Activated T-helper 2 cell treated with anti-CD3 and anti-CD28 coated beads, Interferon-gamma antibody, Interleukin-2, Interleukin-4, amounts not matched to agents 10 μg/mL and 5 μg/mL and 100 μg/mL, durations not matched to agents 14 hours and 24 hours and 36 hours (primary cell): ENCODE measurements at regions of chr9 and their contacts with region 1.

Region 1: DNA sequence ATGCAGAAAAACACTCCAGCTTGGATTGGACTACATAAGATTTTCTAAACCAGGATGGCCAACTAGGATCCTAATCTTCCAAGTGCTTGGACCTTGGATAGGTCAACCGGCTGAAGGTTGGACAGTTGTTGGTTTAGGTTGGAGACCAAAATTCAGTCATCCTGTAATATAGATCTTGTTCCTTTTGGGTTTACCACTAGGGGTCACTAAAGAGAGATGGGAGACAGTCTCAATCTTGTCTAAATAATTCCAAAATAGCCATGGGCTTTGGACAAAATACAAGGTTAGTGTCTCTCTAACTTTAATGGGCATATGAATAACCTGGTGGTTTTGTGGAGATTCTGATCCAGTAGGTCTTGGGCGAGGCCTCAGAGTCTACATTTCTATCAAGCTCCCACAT is 148.7 kb upstream of the ERCC6L2 start:
- DNase-seq: no peak
- H3K4me3 Mint-ChIP-seq: no peak overlapping the region
- H3K27ac Mint-ChIP-seq: no peak overlapping the region
- H3K4me1 Mint-ChIP-seq: peaks cover 41% of the 10 kb centered on the region
- H3K27me3 Mint-ChIP-seq: peaks cover 10% of the 10 kb centered on the region

Region 2: GRCh38 chr9:95171001-95171400 is 555.8 kb before region 1 on chr9:
- intact Hi-C with region 1: loop called (anchors 10 kb)
- DNase-seq: no peak
- H3K4me3 Mint-ChIP-seq: peak overlapping the region; percentile 48
- H3K27ac Mint-ChIP-seq: peak overlapping the region; percentile 63
- H3K4me1 Mint-ChIP-seq: peaks cover 36% of the 10 kb centered on the region
- H3K27me3 Mint-ChIP-seq: no peaks in the 10 kb centered on the region

Region 3: GRCh38 chr9:95462249-95463147 is 264.3 kb before region 1 on chr9:
- intact Hi-C with region 1: loop called (anchors 10 kb)
- DNase-seq: peak; percentile 81
- H3K4me3 Mint-ChIP-seq: peak overlapping the region; percentile 71
- H3K27ac Mint-ChIP-seq: peak overlapping the region; percentile 21
- H3K4me1 Mint-ChIP-seq: peaks cover 29% of the 10 kb centered on the region
- H3K27me3 Mint-ChIP-seq: peaks cover 43% of the 10 kb centered on the region

Region 4: GRCh38 chr9:95715868-95716435 is 10.8 kb before region 1 on chr9:
- intact Hi-C with region 1: no loop called
- DNase-seq: no peak
- H3K4me3 Mint-ChIP-seq: no peak overlapping the region
- H3K27ac Mint-ChIP-seq: no peak overlapping the region
- H3K4me1 Mint-ChIP-seq: no peaks in the 10 kb centered on the region
- H3K27me3 Mint-ChIP-seq: peaks cover 11% of the 10 kb centered on the region

Region 5: DNA sequence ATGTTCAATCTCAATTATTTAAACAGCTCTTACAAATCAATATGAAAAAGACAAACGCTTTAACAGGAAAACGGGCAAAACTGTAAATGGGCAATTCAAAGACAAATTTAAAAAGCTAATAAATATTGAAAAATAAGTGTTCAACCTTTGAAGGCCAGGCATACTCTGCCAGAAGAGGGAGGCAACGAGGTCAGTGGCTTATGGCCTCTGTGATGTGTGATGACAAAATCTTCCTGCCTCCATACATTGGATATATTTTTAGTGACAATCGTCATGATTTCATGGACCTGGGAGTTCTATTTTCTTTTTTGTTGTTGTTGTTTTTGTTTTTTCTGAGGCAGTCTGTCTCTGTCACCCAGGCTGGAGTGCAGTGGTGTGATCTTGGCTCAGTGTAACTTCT is 17.6 kb after region 1 on chr9:
- intact Hi-C with region 1: no loop called
- DNase-seq: no peak
- H3K4me3 Mint-ChIP-seq: no peak overlapping the region
- H3K27ac Mint-ChIP-seq: no peak overlapping the region
- H3K4me1 Mint-ChIP-seq: peaks cover 3% of the 10 kb centered on the region
- H3K27me3 Mint-ChIP-seq: peaks cover 41% of the 10 kb centered on the region

Region 6: DNA sequence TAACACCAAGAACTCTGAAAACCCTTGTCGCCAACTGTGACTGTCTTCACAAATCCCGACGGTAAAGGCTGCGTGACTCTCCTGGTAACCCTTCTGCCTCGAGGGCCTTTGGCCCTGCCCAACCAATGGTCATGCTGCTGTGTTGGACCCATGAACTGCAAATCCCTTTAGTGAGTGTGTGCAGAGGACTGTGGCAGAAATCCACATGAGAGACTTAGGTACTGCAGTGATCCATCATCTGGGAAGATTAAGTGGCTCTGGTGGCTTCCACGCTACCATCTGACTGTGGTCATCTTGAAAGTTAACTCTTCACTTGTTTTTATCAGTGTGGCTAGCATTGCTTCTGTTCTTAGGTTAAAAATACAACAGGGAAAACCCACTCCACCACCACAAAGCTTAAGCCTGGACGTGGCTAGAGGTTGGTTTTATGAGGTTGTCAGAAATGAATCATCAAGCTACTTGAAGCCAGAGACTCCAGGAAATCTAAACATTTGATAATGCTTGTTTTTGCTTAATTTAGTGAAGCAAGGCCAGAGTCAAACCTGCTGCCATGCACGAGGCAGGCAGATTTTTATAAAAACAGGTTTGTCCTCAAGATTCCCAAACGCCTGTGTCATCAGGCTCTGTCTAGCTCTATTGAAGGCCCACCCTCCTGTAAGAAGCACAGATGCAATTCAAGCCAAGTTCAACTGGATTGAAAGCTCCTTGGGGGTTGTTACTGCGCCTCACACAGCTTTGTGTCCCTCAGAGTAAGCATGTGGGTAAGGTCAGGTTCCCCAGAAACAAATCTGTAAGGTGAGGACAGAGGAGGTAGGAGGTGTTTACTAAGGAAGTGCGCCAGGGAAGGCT is 96.1 kb after region 1 on chr9:
- intact Hi-C with region 1: loop called (anchors 1 kb)
- DNase-seq: peak; percentile 40
- H3K4me3 Mint-ChIP-seq: no peak overlapping the region
- H3K27ac Mint-ChIP-seq: peak overlapping the region; percentile 18
- H3K4me1 Mint-ChIP-seq: peaks cover 40% of the 10 kb centered on the region
- H3K27me3 Mint-ChIP-seq: peaks cover 39% of the 10 kb centered on the region

Region 7: GRCh38 chr9:96009690-96010472 is 283.1 kb after region 1 on chr9:
- intact Hi-C with region 1: loop called (anchors 2 kb)
- DNase-seq: peak; percentile 74
- H3K4me3 Mint-ChIP-seq: no peak overlapping the region
- H3K27ac Mint-ChIP-seq: peak overlapping the region; percentile 92
- H3K4me1 Mint-ChIP-seq: peaks cover 54% of the 10 kb centered on the region
- H3K27me3 Mint-ChIP-seq: no peaks in the 10 kb centered on the region

Region 8: GRCh38 chr9:96150324-96151227 is 423.8 kb after region 1 on chr9:
- intact Hi-C with region 1: loop called (anchors 1 kb)
- DNase-seq: peak; percentile 52
- H3K4me3 Mint-ChIP-seq: peak overlapping the region; percentile 44
- H3K27ac Mint-ChIP-seq: peak overlapping the region; percentile 74
- H3K4me1 Mint-ChIP-seq: peaks cover 41% of the 10 kb centered on the region
- H3K27me3 Mint-ChIP-seq: peaks cover 9% of the 10 kb centered on the region